Aorta (tissue), 5 donors: ENCODE measurements at regions of chr3 and their contacts with region 1.

Region 1: DNA sequence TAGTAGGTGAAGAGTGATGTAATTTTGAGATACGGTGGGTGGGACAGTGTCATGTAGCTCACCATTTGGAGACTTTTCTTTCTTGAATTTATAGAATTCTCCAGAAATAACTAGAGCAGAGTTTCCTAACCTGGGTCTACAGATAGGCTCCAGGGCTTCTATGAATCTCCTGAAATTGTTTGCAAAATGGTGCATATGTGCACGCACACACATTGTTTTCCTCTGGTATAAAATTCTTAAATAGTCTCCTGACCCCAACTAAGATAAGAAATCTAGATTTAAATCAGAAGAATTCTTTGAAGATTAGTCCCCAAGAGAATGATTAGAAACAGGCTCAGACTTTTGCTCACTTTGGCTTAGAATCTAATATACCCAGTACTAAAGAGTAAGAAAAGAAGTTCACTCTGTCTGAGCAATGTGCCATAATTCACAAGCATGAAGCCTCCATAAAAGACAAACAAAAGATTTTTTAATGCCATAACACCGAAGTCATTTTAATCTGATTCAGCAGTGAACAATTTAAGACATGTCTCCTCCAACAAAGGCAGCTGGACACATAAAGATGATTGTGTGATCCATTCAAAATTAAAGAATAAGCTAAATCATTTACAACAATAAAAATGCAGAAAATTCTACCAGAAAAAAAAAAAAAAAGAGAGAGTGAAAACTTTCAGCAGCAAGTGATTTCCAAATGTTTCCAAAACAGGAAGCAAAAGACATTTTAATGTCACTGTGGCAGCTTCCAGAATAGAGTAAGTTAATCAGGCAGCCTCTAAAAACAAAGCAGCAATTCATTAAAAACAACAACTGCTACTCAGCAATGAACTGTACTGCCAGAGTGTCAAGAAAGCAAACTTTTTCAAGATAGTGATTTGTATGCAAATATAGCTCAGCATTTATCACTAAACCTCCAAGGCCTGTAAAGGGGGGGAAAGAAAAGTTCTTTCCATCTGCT is 975.5 kb upstream of the CFAP20DC start:
- DNase-seq: no peak
- ATAC-seq: no peak
- H3K4me3 ChIP-seq: no peak overlapping the region
- H3K27ac ChIP-seq: no peak overlapping the region
- H3K4me1 ChIP-seq: peaks cover 0 to 1% of the 10 kb centered on the region in 2 donors
- H3K27me3 ChIP-seq: no peaks in the 10 kb centered on the region

Region 2: DNA sequence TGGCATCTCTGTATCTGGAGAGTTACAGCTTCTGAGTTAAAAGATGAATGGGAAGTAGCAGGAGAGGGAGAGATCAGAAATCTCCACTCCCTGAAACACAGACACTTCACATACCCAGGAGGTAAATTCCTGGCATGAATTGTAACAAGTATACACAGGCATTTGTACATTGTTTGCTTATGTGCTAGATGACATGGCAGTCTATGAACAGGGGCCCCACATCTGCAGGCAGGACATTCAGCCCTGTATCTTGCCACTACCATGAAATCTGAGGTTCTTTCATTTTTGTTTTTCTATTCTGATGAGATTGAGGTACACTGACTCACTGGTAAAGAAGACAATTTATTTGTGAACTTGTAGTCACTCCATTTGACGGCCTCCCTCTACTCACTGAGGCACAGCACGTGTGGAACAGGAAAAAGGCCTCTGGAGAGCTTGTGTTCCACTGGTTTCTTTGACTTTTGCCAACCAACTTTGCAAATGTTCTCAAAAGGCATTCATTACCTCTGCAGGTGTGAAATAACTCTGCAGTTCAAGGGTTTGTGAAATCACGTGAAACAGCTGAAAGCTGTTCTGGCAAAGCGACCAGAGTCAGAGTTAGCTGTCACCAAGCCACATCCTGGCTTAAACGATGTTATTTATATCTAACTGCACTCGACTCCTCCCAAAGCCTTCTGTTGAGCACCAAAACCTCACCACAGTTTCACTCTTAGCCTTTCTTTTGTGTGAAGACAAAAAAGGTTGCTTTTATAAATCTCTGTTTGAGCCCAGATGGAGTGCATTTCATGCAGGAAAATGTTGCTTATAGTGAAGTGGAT is 574.2 kb before region 1 on chr3:
- intact Hi-C with region 1: no loop called
- DNase-seq: no peak
- ATAC-seq: no peak
- H3K4me3 ChIP-seq: no peak overlapping the region
- H3K27ac ChIP-seq: no peak overlapping the region
- H3K4me1 ChIP-seq: no peaks in the 10 kb centered on the region
- H3K27me3 ChIP-seq: no peaks in the 10 kb centered on the region

Region 3: GRCh38 chr3:60076331-60076730 is 51.0 kb after region 1 on chr3:
- intact Hi-C with region 1: loop called in 1 of 2 experiments (anchors 2 kb)
- DNase-seq: no peak
- ATAC-seq: no peak
- H3K4me3 ChIP-seq: peak overlapping the region in 1 of 2 donors; percentile 40
- H3K27ac ChIP-seq: no peak overlapping the region
- H3K4me1 ChIP-seq: peaks cover 0 to 3% of the 10 kb centered on the region in 2 donors
- H3K27me3 ChIP-seq: no peaks in the 10 kb centered on the region

Region 4: GRCh38 chr3:60101621-60102020 is 76.2 kb after region 1 on chr3:
- intact Hi-C with region 1: no loop called
- DNase-seq: no peak
- ATAC-seq: no peak
- H3K4me3 ChIP-seq: no peak overlapping the region
- H3K27ac ChIP-seq: no peak overlapping the region
- H3K4me1 ChIP-seq: no peaks in the 10 kb centered on the region
- H3K27me3 ChIP-seq: peaks cover 0 to 1% of the 10 kb centered on the region in 2 donors